Activated CD4-positive, alpha-beta T cell treated with anti-CD3 and anti-CD28 coated beads for 36 hours (primary cell): ENCODE measurements at regions of chr11 and their contacts with region 1.

Region 1: DNA sequence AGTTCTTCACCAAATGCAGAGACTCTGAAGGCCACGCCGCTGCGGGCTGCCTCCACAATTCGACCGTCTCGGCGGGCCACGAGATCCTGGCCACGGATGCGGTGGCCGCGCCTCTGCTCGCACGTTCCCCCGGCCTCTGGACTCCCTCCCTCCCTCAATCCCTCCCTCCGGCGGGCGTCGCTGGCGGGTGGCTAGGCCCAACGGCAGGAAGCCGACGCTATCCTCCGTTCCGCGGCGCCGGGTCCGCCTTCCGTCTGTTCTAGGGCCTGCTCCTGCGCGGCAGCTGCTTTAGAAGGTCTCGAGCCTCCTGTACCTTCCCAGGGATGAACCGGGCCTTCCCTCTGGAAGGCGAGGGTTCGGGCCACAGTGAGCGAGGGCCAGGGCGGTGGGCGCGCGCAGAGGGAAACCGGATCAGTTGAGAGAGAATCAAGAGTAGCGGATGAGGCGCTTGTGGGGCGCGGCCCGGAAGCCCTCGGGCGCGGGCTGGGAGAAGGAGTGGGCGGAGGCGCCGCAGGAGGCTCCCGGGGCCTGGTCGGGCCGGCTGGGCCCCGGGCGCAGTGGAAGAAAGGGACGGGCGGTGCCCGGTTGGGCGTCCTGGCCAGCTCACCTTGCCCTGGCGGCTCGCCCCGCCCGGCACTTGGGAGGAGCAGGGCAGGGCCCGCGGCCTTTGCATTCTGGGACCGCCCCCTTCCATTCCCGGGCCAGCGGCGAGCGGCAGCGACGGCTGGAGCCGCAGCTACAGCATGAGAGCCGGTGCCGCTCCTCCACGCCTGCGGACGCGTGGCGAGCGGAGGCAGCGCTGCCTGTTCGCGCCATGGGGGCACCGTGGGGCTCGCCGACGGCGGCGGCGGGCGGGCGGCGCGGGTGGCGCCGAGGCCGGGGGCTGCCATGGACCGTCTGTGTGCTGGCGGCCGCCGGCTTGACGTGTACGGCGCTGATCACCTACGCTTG is at the start of gene FUT4:
- DNase-seq: peak; percentile 87
- ATAC-seq: peak; percentile 83
- H3K4me3 Mint-ChIP-seq: peak within 1 kb of the TSS; percentile 92
- H3K27ac Mint-ChIP-seq: peak within 1 kb of the TSS; percentile 99
- H3K4me1 Mint-ChIP-seq: peaks cover 39% of the 10 kb centered on the region
- H3K27me3 Mint-ChIP-seq: no peaks in the 10 kb centered on the region
- total RNA-seq, gene FUT4: 4.4 to 4.9 TPM

Region 2: GRCh38 chr11:93741094-93741881 is 802.7 kb before region 1 on chr11 and contains the starts of genes C11orf54 and TAF1D:
- CTCF ChIA-PET with region 1: no interaction called
- POLR2A ChIA-PET with region 1: no interaction called
- intact Hi-C with region 1: loop called (anchors 1 to 5 kb)
- DNase-seq: peak; percentile 97
- ATAC-seq: peak; percentile 80
- H3K4me3 Mint-ChIP-seq: peak within 1 kb of the TSS; percentile 99
- H3K27ac Mint-ChIP-seq: peak within 1 kb of the TSS; percentile 98
- H3K4me1 Mint-ChIP-seq: peaks cover 38% of the 10 kb centered on the region
- H3K27me3 Mint-ChIP-seq: no peaks in the 10 kb centered on the region
- total RNA-seq, gene C11orf54: 13.8 to 15.7 TPM
- total RNA-seq, gene TAF1D: 326 to 355 TPM

Region 3: DNA sequence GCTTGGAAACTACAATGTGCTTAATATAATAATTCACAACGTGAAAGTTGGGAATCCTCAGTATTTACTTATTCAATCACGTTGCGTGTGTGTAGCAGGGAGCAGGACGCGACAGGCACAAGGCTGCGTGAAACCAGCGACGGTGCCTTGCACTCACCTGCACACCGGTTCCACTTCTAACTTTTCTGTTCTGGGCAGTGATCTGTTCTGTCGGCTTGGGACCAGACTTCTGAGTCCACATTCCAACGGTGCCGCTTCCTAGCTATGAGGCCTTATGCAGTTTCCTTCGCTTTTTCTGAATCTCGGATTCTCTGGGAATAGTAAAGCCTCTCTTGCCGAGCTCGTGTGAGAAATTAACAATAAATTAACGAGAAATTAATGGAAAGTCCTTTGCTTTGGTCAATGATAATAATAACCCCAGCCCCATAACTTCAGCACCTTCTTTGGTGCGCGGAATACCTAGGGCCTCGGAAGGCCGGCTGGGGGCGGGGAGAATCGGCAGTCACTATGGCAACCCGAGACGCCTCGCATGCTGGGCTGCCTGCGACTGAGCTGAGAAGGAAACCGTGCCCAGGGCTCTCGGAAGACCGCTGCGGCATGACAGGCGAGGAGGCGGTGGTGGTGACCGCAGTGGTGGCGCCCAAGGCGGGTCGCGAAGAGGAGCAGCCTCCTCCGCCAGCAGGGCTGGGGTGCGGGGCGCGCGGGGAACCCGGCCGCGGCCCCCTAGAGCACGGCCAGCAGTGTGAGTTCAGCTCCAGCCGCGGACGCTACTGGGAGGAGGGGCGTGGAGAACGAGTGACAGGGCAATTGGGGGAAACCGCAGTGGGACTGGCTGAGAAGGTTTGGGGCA is 31.8 kb before region 1 on chr11 and contains the start of gene C11orf97:
- CTCF ChIA-PET with region 1: interaction called, 3 read pairs
- POLR2A ChIA-PET with region 1: no interaction called
- intact Hi-C with region 1: loop called in 1 of 2 experiments (anchors 2 kb)
- DNase-seq: peak; percentile 73
- ATAC-seq: peak; percentile 88
- H3K4me3 Mint-ChIP-seq: peak within 1 kb of the TSS; percentile 66
- H3K27ac Mint-ChIP-seq: no peak within 1 kb of the TSS
- H3K4me1 Mint-ChIP-seq: peaks cover 9% of the 10 kb centered on the region
- H3K27me3 Mint-ChIP-seq: peaks cover 22% of the 10 kb centered on the region
- total RNA-seq, gene C11orf97: not detected

Region 4: GRCh38 chr11:94973099-94973968 is 429.4 kb after region 1 on chr11 and contains the starts of genes CWC15 and KDM4D:
- CTCF ChIA-PET with region 1: no interaction called
- POLR2A ChIA-PET with region 1: no interaction called
- intact Hi-C with region 1: loop called in 1 of 2 experiments (anchors 1 kb)
- DNase-seq: peak; percentile 97
- ATAC-seq: peak; percentile 99
- H3K4me3 Mint-ChIP-seq: peak within 1 kb of the TSS; percentile 84
- H3K27ac Mint-ChIP-seq: peak within 1 kb of the TSS; percentile 94
- H3K4me1 Mint-ChIP-seq: peaks cover 27% of the 10 kb centered on the region
- H3K27me3 Mint-ChIP-seq: no peaks in the 10 kb centered on the region
- total RNA-seq, gene CWC15: 74.7 to 85.0 TPM
- total RNA-seq, gene KDM4D: 1.5 to 1.8 TPM